Activated CD8-positive, alpha-beta memory T cell treated with anti-CD3 and anti-CD28 coated beads, Interleukin-2, amount 10 ng/mL, durations not matched to agents 7 days and 5 days (primary cell): ENCODE measurements at regions of chr9 and their contacts with region 1.

Region 1: GRCh38 chr9:36190388-36191287 is at the start of gene CLTA:
- DNase-seq: peak; percentile 98
- ATAC-seq: peak; percentile 98
- H3K4me3 Mint-ChIP-seq: peak within 1 kb of the TSS; percentile 99
- H3K27ac Mint-ChIP-seq: peak within 1 kb of the TSS; percentile 93
- H3K4me1 Mint-ChIP-seq: peaks cover 59% of the 10 kb centered on the region
- H3K27me3 Mint-ChIP-seq: peaks cover 3% of the 10 kb centered on the region
- total RNA-seq, gene CLTA: 156 to 177 TPM

Region 2: GRCh38 chr9:36142510-36143244 is 48.0 kb before region 1 on chr9:
- CTCF ChIA-PET with region 1: interaction called, 16 read pairs
- DNase-seq: no peak
- ATAC-seq: peak; percentile 10
- H3K4me3 Mint-ChIP-seq: peak overlapping the region; percentile 77
- H3K27ac Mint-ChIP-seq: peak overlapping the region; percentile 94
- H3K4me1 Mint-ChIP-seq: peaks cover 93% of the 10 kb centered on the region
- H3K27me3 Mint-ChIP-seq: no peaks in the 10 kb centered on the region

Region 3: GRCh38 chr9:36148311-36149051 is 42.2 kb before region 1 on chr9:
- CTCF ChIA-PET with region 1: interaction called, 16 read pairs
- DNase-seq: peak; percentile 92
- ATAC-seq: peak; percentile 43
- H3K4me3 Mint-ChIP-seq: no peak overlapping the region
- H3K27ac Mint-ChIP-seq: peak overlapping the region; percentile 69
- H3K4me1 Mint-ChIP-seq: peaks cover 90% of the 10 kb centered on the region
- H3K27me3 Mint-ChIP-seq: no peaks in the 10 kb centered on the region

Region 4: DNA sequence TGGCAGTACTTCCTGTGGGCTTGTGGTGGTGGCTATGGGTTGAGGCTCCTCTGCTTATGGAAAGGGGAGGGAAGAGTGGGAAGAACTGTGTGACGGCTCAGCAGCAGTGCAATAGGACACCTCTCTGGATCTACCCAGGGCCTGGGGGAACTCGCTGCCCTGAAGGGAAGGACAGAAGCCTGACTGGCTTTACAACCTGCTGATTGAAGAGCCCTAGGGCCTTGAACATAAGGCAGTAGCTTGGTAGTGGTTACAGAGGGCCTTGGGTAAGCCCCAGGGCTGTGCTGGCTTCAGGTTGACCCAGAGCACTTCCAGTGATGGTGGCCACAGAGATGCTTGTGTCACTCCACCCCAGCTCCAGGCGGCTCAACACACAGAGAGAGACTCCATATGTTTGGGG is 15.9 kb before region 1 on chr9:
- CTCF ChIA-PET with region 1: interaction called, 11 read pairs
- DNase-seq: no peak
- ATAC-seq: no peak
- H3K4me3 Mint-ChIP-seq: no peak overlapping the region
- H3K27ac Mint-ChIP-seq: no peak overlapping the region
- H3K4me1 Mint-ChIP-seq: peaks cover 13% of the 10 kb centered on the region
- H3K27me3 Mint-ChIP-seq: peaks cover 7% of the 10 kb centered on the region

Region 5: GRCh38 chr9:36204906-36205547 is 14.4 kb after region 1 on chr9:
- CTCF ChIA-PET with region 1: interaction called, 20 read pairs
- DNase-seq: no peak
- ATAC-seq: no peak
- H3K4me3 Mint-ChIP-seq: no peak overlapping the region
- H3K27ac Mint-ChIP-seq: peak overlapping the region; percentile 35
- H3K4me1 Mint-ChIP-seq: peaks cover 53% of the 10 kb centered on the region
- H3K27me3 Mint-ChIP-seq: no peaks in the 10 kb centered on the region

Region 6: DNA sequence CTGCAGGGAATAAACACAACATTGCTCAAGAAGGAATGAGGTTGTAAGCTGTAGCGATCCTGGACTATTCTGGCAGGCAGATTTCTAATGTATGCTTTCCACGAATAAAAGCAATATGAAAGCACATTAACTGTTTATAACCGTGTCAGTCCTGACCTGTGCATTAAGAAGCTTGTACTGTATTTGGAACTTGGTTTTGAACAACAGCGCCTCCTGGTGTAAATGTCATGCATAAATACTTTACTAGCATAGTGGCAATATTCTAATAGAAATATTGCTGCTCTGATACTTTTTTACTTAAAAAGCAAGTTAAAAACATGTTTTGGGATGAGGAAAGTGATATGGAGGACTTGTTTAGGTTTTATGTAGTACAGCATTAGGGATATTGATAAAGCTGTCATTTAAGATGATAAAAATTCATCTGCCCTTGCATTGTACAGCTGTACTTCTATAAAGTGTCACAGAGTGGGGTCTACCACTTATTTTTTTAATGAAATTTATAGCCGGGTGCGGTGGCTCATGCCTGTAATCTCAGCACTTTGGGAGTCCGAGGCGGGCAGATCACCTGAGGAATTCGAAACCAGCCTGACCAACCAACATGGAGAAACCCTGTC is 138.3 kb after region 1 on chr9:
- CTCF ChIA-PET with region 1: interaction called, 17 read pairs
- DNase-seq: peak; percentile 52
- ATAC-seq: peak; percentile 79
- H3K4me3 Mint-ChIP-seq: no peak overlapping the region
- H3K27ac Mint-ChIP-seq: no peak overlapping the region
- H3K4me1 Mint-ChIP-seq: peaks cover 5% of the 10 kb centered on the region
- H3K27me3 Mint-ChIP-seq: no peaks in the 10 kb centered on the region

Region 7: GRCh38 chr9:36625006-36625615 is 434.5 kb after region 1 on chr9:
- CTCF ChIA-PET with region 1: no interaction called
- DNase-seq: no peak
- ATAC-seq: no peak
- H3K4me3 Mint-ChIP-seq: no peak overlapping the region
- H3K27ac Mint-ChIP-seq: peak overlapping the region; percentile 60
- H3K4me1 Mint-ChIP-seq: peaks cover 2% of the 10 kb centered on the region
- H3K27me3 Mint-ChIP-seq: no peaks in the 10 kb centered on the region